Heart right ventricle (tissue), 16 donors: ENCODE measurements at regions of chr16 and their contacts with region 1.

Region 1: DNA sequence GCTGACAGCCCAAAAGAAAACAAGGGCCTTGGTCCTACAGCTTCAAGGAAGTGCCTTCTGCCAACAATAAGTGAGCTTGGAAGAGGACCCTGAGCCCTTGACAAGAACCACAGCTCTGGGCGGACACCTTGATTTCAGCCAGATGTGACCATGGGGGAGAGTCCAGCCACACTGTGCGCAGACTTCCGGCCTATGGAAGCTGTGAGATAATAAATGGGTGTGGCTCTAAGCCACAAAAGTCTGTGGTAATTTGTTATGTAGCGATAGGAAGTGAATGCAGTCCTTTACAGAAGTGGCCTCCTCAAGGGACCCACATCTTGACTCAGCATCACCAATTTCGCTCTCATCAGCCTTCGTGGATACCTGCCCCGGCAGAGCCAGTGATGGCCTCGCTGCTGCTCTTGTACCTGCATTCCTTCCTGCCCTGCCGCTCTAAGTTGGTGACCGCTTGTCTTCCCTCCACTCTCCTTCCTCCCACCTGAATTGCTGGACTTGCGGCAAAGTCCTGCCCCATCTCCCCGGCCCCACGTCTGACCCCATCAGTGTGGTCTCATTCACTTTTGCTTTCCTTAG is 29.3 kb downstream of the PRSS54 start:
- DNase-seq: no peak
- ATAC-seq: no peak
- H3K4me3 ChIP-seq: no peak overlapping the region
- H3K27ac ChIP-seq: no peak overlapping the region
- H3K4me1 ChIP-seq: peaks cover 0 to 11% (median 0%) of the 10 kb centered on the region in 9 donors
- H3K27me3 ChIP-seq: no peaks in the 10 kb centered on the region
- CTCF ChIP-seq: no peak

Region 2: DNA sequence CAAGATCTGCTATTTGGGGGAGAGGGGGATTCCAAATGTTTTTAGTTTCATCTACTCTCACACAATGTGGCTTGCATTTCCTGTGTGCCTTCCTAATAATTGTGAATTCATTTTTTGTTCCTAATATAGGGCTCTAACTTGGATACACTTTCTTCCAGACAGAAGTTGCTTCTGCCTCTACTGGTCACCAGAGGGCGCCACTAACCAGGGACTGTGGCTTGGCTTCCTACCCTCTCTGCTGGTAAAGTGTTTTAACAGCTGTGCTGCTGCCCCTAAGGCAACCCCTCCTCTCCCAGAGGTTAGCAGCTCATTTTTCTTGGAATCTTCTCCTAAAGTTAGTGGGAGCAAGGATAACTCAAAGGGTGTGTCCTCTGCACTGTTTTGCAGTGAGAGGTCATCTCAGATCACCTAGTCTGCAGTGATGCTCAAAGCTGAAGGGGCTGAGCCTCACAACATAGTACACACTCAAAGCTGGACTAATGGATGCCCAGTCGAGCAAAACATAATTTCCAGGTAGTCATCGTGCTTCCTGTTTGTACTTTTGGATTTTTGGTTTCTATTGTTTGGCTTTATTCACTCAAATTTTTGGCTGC is 34.3 kb after region 1 on chr16:
- intact Hi-C with region 1: loop called in 1 of 10 experiments (anchors 2 kb)
- DNase-seq: peak in 1 of 2 donors; percentile 24
- ATAC-seq: peak in 2 of 8 donors; percentile 10 to 59
- H3K4me3 ChIP-seq: no peak overlapping the region
- H3K27ac ChIP-seq: peak overlapping the region in 1 of 10 donors; percentile 29
- H3K4me1 ChIP-seq: peaks cover 0 to 9% (median 0%) of the 10 kb centered on the region in 9 donors
- H3K27me3 ChIP-seq: no peaks in the 10 kb centered on the region
- CTCF ChIP-seq: peak in 7 of 9 donors; percentile 51 to 73 (median 62)